H1 (cell line): ENCODE measurements at regions of chr16 and their contacts with region 1.

Region 1: DNA sequence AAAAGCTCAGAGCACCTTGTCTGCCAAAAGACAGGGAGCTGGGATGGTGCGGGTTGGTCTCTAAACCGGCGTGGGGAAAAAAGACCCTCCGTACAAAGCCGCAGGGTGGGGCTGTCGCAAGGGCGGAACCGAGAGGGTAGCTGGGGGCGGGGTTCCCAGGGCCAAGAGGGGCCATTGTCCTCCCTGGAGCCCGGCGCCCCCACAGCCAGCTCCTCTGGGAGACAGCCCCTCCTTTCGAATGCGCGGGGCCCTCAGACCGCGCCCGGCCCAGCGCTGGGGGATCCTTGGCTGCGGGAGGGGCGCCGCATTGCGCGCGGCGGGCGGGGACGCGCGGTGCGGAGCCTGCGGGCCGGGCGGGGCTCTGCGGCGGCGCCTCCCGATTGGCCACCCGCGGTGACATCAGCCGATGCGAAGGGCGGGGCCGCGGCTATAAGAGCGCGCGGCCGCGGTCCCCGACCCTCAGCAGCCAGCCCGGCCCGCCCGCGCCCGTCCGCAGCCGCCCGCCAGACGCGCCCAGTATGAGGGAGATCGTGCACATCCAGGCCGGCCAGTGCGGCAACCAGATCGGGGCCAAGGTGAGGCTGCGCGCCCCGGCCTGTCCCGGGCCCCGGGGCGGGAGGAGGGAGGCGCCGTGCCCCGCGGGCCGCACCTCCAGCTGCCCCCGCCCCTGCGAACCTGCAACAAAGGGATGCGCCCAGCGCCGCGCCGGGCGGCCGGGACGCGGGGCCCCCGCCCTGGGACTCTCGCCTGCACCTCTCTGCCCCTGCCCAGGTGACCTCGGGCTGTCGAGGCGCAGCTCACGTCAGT is at the start of gene TUBB3:
- DNase-seq: peak in 1 of 2 experiments; percentile 93
- H3K4me3 ChIP-seq: peak within 1 kb of the TSS; percentile 65 to 95 (median 72)
- H3K27ac ChIP-seq: peak within 1 kb of the TSS; percentile 39; the same call in 1 of the 2 replicates
- H3K4me1 ChIP-seq: peaks cover 0 to 32% (median 22%) of the 10 kb centered on the region in 4 experiments; a peak in 6 of 7 replicates
- H3K27me3 ChIP-seq: peaks cover 0 to 19% (median 16%) of the 10 kb centered on the region in 4 experiments; a peak in 6 of 7 replicates
- CTCF ChIP-seq: no peak
- EP300 ChIP-seq: no peak
- POLR2A ChIP-seq: peak in 1 of 2 experiments; percentile 97; a peak in 2 of 3 replicates
- RAD21 ChIP-seq: 0 out of 4 replicates have a peak, but pooled peaks of 1 of the 2 experiments have one; percentile 8
- total RNA-seq, gene TUBB3: 275 and 292 TPM in 2 replicates

Region 2: GRCh38 chr16:89657442-89658220 is 265.5 kb before region 1 on chr16 and contains the starts of genes CHMP1A and SPATA33:
- CTCF ChIA-PET with region 1: no interaction called
- POLR2A ChIA-PET with region 1: no interaction called
- DNase-seq: peak; percentile 58 to 97
- H3K4me3 ChIP-seq: peak within 1 kb of the TSS; percentile 79 to 99 (median 87)
- H3K27ac ChIP-seq: 0 out of 2 replicates have a peak within 1 kb of the TSS, but pooled peaks have one; percentile 30
- H3K4me1 ChIP-seq: peaks cover 0 to 8% (median 3%) of the 10 kb centered on the region in 4 experiments; a peak in 3 of 7 replicates
- H3K27me3 ChIP-seq: no peaks in the 10 kb centered on the region
- CTCF ChIP-seq: no peak
- EP300 ChIP-seq: no peak
- POLR2A ChIP-seq: peak in 1 of 2 experiments; percentile 74; a peak in 2 of 3 replicates
- RAD21 ChIP-seq: no peak
- total RNA-seq, gene CHMP1A: 64.4 and 73.5 TPM in 2 replicates
- total RNA-seq, gene SPATA33: 13.5 and 16.9 TPM in 2 replicates

Region 3: DNA sequence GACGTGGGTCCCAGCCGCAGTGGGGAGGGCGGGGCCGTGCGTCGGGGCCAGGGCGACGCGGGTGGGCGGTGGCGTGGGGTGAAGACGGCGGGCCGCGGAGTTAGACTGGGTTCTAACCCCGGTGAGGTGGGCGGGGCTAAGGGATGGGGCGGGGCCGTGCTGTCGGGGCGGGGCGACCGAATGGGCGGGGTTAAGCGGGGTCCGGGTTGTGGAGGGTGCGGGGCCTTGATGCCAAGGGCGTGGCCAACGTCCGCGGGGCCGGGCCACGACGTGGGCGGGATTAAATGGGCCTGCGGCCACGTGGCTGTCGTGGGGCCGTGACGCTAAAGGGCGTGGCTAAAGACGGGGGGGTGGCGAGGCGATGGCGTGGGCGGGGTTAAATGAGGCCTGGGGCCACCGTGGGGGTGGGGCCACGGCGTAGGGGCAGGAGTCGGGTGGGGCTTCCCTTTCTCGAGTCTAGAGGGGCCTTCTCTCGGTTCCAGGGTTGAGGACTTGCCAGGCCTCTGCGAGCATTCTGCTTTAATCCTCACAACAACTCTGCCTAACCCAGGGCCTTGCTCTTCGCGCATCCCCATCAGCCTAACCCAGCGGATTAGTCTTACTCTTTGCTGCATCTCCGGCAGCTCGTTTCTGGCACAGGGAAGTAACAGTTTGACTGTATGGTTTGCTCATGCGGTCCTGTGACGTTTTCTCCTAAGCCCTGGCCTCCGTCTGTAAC is 49.0 kb before region 1 on chr16:
- CTCF ChIA-PET with region 1: interaction called, 3 read pairs
- POLR2A ChIA-PET with region 1: interaction called, 15 read pairs
- DNase-seq: peak; percentile 92 to 98
- H3K4me3 ChIP-seq: peak overlapping the region; percentile 84 to 97 (median 90)
- H3K27ac ChIP-seq: peak overlapping the region; percentile 40; the same call in 1 of the 2 replicates
- H3K4me1 ChIP-seq: peaks cover 0 to 9% (median 2%) of the 10 kb centered on the region in 4 experiments; a peak in 4 of 7 replicates
- H3K27me3 ChIP-seq: no peaks in the 10 kb centered on the region
- CTCF ChIP-seq: no peak
- EP300 ChIP-seq: no peak
- POLR2A ChIP-seq: peak in 1 of 2 experiments; percentile 35; a peak in 1 of 3 replicates
- RAD21 ChIP-seq: no peak

Region 4: GRCh38 chr16:89934611-89935553 is 11.8 kb after region 1 on chr16:
- CTCF ChIA-PET with region 1: interaction called, 3 read pairs
- POLR2A ChIA-PET with region 1: interaction called, 16 read pairs
- DNase-seq: no peak
- H3K4me3 ChIP-seq: no peak overlapping the region
- H3K27ac ChIP-seq: no peak overlapping the region
- H3K4me1 ChIP-seq: no peaks in the 10 kb centered on the region
- H3K27me3 ChIP-seq: no peaks in the 10 kb centered on the region
- CTCF ChIP-seq: no peak
- EP300 ChIP-seq: no peak
- POLR2A ChIP-seq: no peak
- RAD21 ChIP-seq: no peak

Region 5: DNA sequence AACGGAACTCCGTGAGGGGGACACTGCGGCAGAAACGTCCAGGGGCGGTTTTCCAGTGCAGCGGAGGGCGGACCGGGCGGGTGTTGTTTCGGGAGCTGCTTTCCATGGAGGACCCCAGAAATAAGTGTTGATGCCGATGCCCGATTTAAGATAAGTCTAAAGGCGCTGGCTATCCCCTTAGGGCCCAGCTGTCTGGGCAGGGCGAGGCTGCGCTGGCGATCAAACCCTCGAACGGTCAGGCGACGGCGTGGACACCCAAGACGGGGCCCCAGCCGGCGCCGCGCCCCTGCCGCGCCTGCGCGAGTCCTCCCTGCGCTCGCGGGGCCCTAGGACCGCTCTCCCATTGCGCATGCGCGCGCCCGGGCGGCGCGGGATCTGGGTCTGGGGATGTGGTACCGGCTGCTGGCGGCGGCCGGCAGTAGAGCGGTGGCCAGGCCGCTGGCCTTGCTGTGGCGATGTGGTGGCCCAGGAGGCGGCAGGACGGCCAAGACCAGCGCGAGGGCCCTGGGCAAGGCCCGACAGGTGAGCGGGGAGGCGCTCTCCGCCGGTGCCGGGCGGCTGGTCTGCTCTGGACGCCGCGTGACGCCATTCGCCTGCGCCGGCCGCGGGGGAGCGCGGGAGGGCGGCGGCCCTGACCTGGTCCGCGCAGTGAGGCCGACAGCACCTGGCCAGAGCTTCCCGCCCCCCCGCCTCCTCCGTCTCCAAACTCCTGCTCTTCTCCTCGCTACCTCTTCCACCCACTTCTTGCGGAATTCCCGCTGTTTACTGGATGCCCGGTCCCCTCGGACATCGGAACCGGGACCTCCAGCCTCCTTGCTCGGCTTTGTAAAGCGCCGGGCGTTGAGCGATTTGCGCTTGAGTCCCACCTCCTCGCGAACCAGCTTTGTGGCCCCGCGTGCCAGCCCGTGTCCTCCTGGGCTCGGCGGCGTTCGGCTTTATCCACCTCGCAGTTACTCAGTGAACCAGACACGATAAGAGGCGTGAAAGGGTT is 49.5 kb after region 1 on chr16:
- CTCF ChIA-PET with region 1: no interaction called
- POLR2A ChIA-PET with region 1: interaction called, 28 read pairs
- DNase-seq: peak; percentile 67 to 95
- H3K4me3 ChIP-seq: peak overlapping the region; percentile 77 to 97 (median 94)
- H3K27ac ChIP-seq: peak overlapping the region; percentile 99
- H3K4me1 ChIP-seq: peaks cover 0 to 8% (median 3%) of the 10 kb centered on the region in 4 experiments; a peak in 3 of 7 replicates
- H3K27me3 ChIP-seq: peaks cover 0 to 6% (median 0%) of the 10 kb centered on the region in 4 experiments; a peak in 2 of 7 replicates
- CTCF ChIP-seq: no peak
- EP300 ChIP-seq: no peak
- POLR2A ChIP-seq: peak; percentile 81 to 98
- RAD21 ChIP-seq: no peak

Region 6: DNA sequence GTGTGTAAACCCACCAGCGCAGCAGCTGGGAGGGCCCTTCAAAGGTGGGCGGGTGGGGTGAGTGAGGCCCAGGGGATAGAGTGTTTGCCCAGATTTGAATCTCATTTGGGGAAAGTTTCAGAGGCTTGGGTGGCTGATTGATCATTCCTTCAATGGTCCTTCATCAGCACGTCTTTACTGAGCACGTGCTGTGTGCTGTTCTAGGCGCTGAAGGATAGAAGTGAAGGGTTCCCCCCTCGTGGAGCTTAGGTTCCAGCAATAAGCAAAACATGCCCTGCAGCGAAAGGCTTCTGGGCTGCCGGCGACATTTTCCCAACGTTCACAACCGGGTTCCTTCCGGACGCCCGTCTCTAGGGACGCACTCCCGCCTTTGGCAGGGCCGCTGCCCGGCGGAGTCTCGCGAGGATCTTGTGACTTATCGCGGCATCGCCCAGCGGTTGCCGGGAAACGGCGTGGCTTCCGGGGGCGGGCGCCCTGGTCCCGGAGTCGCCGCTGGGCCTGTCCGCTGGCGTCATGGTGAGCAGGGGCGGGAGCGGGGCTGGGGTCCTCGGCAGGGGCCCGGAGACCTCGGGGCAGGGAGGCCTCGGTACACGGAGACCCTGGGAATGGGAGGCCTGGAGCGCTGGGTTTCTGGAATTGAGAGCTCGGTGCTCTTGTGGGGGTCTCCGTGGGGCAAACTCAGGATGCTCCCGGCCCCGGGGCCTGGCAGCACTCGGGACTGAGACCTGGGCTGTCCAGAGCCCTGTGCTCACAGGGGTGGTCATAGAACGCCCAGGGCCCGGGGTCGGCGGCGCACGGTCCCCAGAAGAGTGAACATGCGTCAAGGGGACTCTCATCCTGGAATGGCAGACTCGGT is 99.3 kb after region 1 on chr16:
- CTCF ChIA-PET with region 1: interaction called, 4 read pairs
- POLR2A ChIA-PET with region 1: interaction called, 15 read pairs
- DNase-seq: peak in 1 of 2 experiments; percentile 83
- H3K4me3 ChIP-seq: peak overlapping the region; percentile 23 to 55 (median 32); a peak in 6 of 8 replicates
- H3K27ac ChIP-seq: peak overlapping the region; percentile 63; the same call in 1 of the 2 replicates
- H3K4me1 ChIP-seq: peaks cover 8 to 12% (median 8%) of the 10 kb centered on the region in 4 experiments; a peak in 6 of 7 replicates
- H3K27me3 ChIP-seq: no peaks in the 10 kb centered on the region; a peak in 2 of 7 replicates
- CTCF ChIP-seq: no peak
- EP300 ChIP-seq: no peak
- POLR2A ChIP-seq: peak in 1 of 2 experiments; percentile 48; a peak in 2 of 3 replicates
- RAD21 ChIP-seq: no peak

Region 7: DNA sequence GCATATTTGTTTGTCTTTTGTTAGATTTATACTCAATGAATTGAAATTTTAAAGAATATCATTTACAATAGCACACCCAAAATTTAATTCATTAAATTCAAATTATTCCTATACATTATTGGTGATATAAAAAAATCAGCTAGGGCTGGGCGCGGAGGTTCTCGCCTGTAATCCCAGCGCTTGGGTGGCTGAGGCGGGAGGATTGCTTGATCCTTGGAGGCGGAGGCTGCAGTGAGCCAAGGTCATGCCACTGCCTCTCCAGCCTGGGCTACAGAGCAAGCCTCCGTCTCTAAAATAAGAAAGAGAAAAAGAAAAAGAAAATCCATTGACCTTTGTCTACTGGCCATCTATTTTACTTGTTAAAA is 158.5 kb after region 1 on chr16:
- CTCF ChIA-PET with region 1: no interaction called
- POLR2A ChIA-PET with region 1: no interaction called
- DNase-seq: no peak
- H3K4me3 ChIP-seq: no peak overlapping the region
- H3K27ac ChIP-seq: no peak overlapping the region
- H3K4me1 ChIP-seq: peaks cover 0 to 6% (median under 1%) of the 10 kb centered on the region in 4 experiments; a peak in 2 of 7 replicates
- H3K27me3 ChIP-seq: peaks cover 0 to 9% (median 7%) of the 10 kb centered on the region in 4 experiments; a peak in 4 of 7 replicates
- CTCF ChIP-seq: no peak
- EP300 ChIP-seq: no peak
- POLR2A ChIP-seq: no peak
- RAD21 ChIP-seq: no peak